Dendritic cell treated with granulocyte-macrophage colony-stimulating factor and Interleukin-4, amounts not matched to agents 40 ng/mL and 50 ng/mL, for 4 days (primary cell): ENCODE measurements at regions of chr19 and their contacts with region 1.

Region 1: GRCh38 chr19:4342615-4343369 is 570 bp upstream of the MPND start:
- H3K4me3 Mint-ChIP-seq: peak overlapping the region; percentile 96
- H3K27ac Mint-ChIP-seq: peak overlapping the region; percentile 82
- H3K4me1 Mint-ChIP-seq: peaks cover 47% of the 10 kb centered on the region
- H3K27me3 Mint-ChIP-seq: peaks cover 12% of the 10 kb centered on the region

Region 2: DNA sequence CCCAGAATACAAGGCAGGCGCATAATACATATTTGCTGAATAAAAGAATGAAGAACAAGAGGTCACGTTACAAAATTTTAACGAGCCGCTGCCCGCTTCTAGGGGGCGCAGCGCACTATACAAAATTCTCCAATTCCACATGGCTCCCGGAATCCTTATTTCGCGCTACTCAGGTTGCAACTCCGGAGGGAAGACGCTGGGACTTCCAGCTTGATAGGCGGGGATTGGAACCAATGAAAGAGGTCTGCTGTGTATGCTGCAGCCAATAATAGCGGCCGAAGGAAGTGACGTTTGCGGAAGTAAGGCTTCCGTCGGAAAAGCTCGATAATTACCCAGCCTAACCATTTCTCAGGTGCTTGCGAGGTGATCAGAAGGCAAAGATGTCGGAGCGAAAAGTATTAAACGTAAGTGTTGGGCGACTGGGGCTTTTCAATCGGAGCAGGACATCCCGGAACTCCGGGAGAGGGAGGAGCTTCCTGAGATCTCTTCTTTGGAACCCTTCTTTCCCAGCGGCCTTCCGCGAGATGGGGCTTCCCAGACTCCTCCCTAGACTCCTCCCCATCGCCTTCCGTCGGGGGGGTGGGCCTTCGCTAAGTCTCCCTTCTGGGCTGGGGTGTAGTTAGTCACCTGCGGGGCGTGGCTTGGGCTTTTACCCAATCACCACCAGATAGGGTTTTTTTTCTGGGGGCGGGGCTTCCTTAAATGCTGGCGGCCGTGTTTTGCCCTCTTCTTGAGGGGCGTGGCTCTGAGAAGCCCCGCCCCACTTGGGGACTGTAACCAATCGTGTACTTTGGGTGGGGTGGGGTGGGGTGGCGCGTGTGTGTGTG is 95.8 kb before region 1 on chr19 and contains the start of gene YJU2:
- intact Hi-C with region 1: loop called (anchors 5 kb)
- H3K4me3 Mint-ChIP-seq: peak within 1 kb of the TSS; percentile 92
- H3K27ac Mint-ChIP-seq: peak within 1 kb of the TSS; percentile 99
- H3K4me1 Mint-ChIP-seq: peaks cover 23% of the 10 kb centered on the region
- H3K27me3 Mint-ChIP-seq: no peaks in the 10 kb centered on the region

Region 3: GRCh38 chr19:4278419-4279266 is 64.1 kb before region 1 on chr19 and contains the start of gene SHD:
- intact Hi-C with region 1: no loop called
- H3K4me3 Mint-ChIP-seq: no peak within 1 kb of the TSS
- H3K27ac Mint-ChIP-seq: no peak within 1 kb of the TSS
- H3K4me1 Mint-ChIP-seq: peaks cover 5% of the 10 kb centered on the region
- H3K27me3 Mint-ChIP-seq: peaks cover 64% of the 10 kb centered on the region

Region 4: GRCh38 chr19:4328243-4328990 is 14.4 kb before region 1 on chr19:
- intact Hi-C with region 1: loop called (anchors 2 kb)
- H3K4me3 Mint-ChIP-seq: peak overlapping the region; percentile 82
- H3K27ac Mint-ChIP-seq: peak overlapping the region; percentile 77
- H3K4me1 Mint-ChIP-seq: peaks cover 35% of the 10 kb centered on the region
- H3K27me3 Mint-ChIP-seq: peaks cover 60% of the 10 kb centered on the region

Region 5: DNA sequence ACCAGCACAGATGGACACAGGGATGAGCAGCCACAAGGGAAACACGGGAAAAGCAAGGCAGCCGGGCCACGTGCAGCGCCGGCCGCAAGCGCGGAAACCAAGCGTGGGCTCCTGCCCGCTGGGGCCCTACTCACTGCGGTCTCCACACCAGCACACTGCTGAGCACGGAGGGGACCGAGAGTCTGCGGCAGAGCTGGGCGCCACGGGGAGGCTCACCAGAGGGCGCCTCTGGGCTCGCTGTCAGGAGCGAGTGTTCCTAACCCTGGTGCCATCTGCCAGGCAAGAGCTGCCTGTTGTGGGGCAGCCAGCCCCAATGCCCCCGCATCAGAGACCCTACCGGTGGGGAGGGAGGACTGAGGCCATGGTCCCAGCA is 27.1 kb after region 1 on chr19:
- intact Hi-C with region 1: no loop called
- H3K4me3 Mint-ChIP-seq: peak overlapping the region; percentile 67
- H3K27ac Mint-ChIP-seq: peak overlapping the region; percentile 91
- H3K4me1 Mint-ChIP-seq: peaks cover 93% of the 10 kb centered on the region
- H3K27me3 Mint-ChIP-seq: no peaks in the 10 kb centered on the region

Region 6: GRCh38 chr19:4400135-4400936 is 57.5 kb after region 1 on chr19 and contains the start of gene SH3GL1:
- intact Hi-C with region 1: no loop called
- H3K4me3 Mint-ChIP-seq: peak within 1 kb of the TSS; percentile 96
- H3K27ac Mint-ChIP-seq: peak within 1 kb of the TSS; percentile 93
- H3K4me1 Mint-ChIP-seq: peaks cover 63% of the 10 kb centered on the region
- H3K27me3 Mint-ChIP-seq: no peaks in the 10 kb centered on the region